ENCODE measurements at regions of chr3 and their contacts with region 1.

Region 1: DNA sequence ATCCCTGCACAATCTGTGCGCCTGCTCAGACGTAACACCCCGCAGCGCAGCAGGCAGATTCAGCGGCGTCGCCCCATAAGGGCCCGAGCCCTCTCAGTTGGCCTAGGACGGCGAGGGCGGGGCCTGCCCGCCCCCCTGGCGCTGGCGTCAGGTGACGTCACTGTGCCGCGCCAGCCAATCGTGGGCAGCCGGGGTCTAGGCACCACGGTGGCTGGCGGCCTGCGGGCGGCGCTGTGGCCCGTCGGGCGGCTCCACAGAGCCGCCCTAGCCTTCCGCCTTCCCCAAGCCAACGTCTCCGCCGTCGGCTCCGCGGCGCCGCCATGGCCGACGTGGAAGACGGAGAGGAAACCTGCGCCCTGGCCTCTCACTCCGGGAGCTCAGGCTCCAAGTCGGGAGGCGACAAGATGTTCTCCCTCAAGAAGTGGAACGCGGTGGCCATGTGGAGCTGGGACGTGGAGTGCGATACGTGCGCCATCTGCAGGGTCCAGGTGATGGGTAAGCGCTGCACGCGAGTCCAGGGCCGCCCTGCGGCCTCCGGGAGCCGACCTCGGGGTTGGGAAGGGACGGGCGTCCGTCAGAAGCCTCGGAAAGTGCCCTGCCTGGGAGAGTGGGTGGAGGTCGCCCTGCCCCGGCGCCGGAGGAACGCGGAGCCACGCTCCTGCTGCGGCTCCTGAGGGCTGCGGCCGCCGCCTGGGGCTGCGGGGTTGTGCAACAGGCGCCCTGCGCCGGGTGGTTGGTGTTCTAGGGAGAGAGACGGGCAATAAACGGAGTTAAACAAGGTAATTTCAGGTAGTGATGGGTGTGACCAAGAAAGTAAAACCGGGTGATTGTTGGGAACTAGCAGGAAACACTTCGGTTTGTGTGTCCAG is at the start of gene RNF7:
- DNase-seq: peak; percentile 98
- ATAC-seq: peak; percentile 93
- H3K4me3 Mint-ChIP-seq: peak within 1 kb of the TSS; percentile 96
- H3K27ac Mint-ChIP-seq: peak within 1 kb of the TSS; percentile 96
- H3K4me1 Mint-ChIP-seq: peaks cover 40% of the 10 kb centered on the region
- H3K27me3 Mint-ChIP-seq: no peaks in the 10 kb centered on the region
- CTCF ChIP-seq: no peak
- total RNA-seq, gene RNF7: 60.7 and 62.1 TPM in 2 replicates

Region 2: DNA sequence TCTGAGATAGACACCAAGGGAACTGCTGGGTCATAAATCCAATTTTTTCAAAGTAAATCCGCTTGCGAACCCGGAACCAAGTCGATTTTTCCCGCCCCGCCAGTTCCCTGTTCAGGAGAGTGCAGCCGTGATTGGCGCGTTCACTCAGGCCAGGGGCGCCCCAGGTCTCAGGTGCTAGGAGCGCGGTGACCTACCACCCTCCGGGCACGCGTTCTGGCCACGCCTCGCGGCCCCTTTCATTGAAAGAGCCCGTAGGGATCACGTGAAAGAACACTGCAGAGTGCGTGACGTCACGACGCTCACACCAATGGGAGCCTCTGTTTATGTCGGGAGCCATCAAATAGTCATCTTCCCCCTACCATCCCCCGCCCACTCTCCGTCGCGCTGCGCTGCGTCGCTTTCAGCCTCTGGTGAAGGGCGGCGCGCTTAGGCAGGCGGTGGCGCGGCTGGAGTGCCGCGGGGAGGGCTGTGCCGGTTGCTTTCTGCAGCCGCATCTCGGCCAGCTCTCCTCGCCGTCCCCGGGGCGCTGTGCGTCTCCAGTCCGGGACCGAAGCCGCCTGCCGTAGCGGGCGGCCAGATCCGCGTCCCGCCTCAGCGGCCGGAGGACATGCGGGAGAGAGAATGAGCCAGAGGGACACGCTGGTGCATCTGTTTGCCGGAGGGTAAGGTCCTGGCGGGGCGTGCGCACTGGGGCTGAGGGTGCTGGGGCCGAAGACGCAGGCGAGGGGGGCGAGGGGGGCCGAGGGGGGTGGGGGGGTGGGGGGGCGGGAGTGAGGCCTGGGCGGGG is 796.6 kb before region 1 on chr3 and contains the start of gene SLC25A36:
- CTCF ChIA-PET with region 1: no interaction called
- POLR2A ChIA-PET with region 1: no interaction called
- intact Hi-C with region 1: loop called (anchors 2 kb)
- DNase-seq: peak; percentile 86
- ATAC-seq: peak; percentile 96
- H3K4me3 Mint-ChIP-seq: peak within 1 kb of the TSS; percentile 96
- H3K27ac Mint-ChIP-seq: peak within 1 kb of the TSS; percentile 96
- H3K4me1 Mint-ChIP-seq: peaks cover 37% of the 10 kb centered on the region
- H3K27me3 Mint-ChIP-seq: no peaks in the 10 kb centered on the region
- CTCF ChIP-seq: no peak
- total RNA-seq, gene SLC25A36: 40.4 and 45.7 TPM in 2 replicates

Region 3: DNA sequence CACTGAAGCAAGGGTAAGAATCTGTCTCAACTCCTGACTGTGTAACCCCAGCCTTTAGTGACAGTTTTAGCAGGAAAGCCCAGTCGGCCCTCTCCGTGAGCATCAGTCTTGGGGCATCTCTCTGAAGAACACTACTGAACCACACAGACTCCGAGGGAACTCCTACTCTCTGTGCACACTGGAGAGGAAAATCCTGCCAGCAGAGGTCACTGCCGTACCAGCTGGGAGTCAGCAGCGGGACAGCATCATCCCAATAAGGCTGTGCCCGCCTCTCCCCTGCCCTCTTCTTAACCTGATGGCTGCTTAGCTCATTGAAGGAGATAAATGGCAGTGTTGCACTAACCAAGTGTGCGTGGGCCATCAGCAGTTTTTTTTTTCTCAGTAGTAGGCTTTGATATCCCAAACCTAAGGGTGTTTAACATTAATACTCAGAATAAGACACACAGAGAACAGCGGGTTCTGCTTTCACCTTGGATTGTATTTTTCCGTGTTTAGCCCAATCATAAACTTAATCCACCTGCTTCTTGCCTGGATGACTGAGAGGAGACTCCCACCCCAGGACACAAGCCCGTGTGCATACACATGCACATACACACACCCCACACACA is 278.1 kb before region 1 on chr3:
- CTCF ChIA-PET with region 1: no interaction called
- POLR2A ChIA-PET with region 1: no interaction called
- intact Hi-C with region 1: loop called (anchors 1 kb)
- DNase-seq: peak; percentile 67
- ATAC-seq: peak; percentile 99
- H3K4me3 Mint-ChIP-seq: no peak overlapping the region
- H3K27ac Mint-ChIP-seq: no peak overlapping the region
- H3K4me1 Mint-ChIP-seq: peaks cover 11% of the 10 kb centered on the region
- H3K27me3 Mint-ChIP-seq: no peaks in the 10 kb centered on the region
- CTCF ChIP-seq: no peak

Region 4: DNA sequence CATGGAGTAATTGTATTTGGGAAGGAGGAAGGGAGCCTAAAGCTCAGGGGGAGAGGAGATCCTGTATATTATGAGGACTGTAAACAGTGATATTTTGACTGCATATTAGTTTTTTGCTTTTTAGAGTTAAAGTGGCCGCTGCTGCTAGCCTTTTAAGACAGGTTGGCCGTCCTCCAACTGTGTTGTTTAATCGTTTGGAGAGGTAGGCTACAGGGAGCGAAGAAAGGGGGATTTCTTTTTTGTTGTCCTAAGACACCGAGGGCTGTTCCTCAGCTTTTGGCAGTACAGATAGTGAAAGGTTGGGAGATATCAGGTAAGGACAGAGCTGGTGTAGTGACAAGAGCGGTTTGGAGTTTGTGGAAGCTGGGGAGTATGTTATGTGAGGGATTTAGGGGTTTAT is 38.4 kb before region 1 on chr3:
- CTCF ChIA-PET with region 1: no interaction called
- POLR2A ChIA-PET with region 1: no interaction called
- intact Hi-C with region 1: no loop called
- DNase-seq: no peak
- ATAC-seq: no peak
- H3K4me3 Mint-ChIP-seq: no peak overlapping the region
- H3K27ac Mint-ChIP-seq: no peak overlapping the region
- H3K4me1 Mint-ChIP-seq: no peaks in the 10 kb centered on the region
- H3K27me3 Mint-ChIP-seq: no peaks in the 10 kb centered on the region
- CTCF ChIP-seq: no peak

Region 5: GRCh38 chr3:141796081-141796888 is 58.0 kb after region 1 on chr3:
- CTCF ChIA-PET with region 1: no interaction called
- POLR2A ChIA-PET with region 1: interaction called, 21 read pairs
- intact Hi-C with region 1: loop called (anchors 1 kb)
- DNase-seq: peak; percentile 39
- ATAC-seq: peak; percentile 86
- H3K4me3 Mint-ChIP-seq: peak overlapping the region; percentile 85
- H3K27ac Mint-ChIP-seq: peak overlapping the region; percentile 85
- H3K4me1 Mint-ChIP-seq: peaks cover 34% of the 10 kb centered on the region
- H3K27me3 Mint-ChIP-seq: peaks cover 2% of the 10 kb centered on the region
- CTCF ChIP-seq: no peak

Region 6: GRCh38 chr3:141998669-141999290 is 260.5 kb after region 1 on chr3:
- CTCF ChIA-PET with region 1: no interaction called
- POLR2A ChIA-PET with region 1: no interaction called
- intact Hi-C with region 1: loop called (anchors 1 kb)
- DNase-seq: no peak
- ATAC-seq: no peak
- H3K4me3 Mint-ChIP-seq: no peak overlapping the region
- H3K27ac Mint-ChIP-seq: no peak overlapping the region
- H3K4me1 Mint-ChIP-seq: peaks cover 3% of the 10 kb centered on the region
- H3K27me3 Mint-ChIP-seq: no peaks in the 10 kb centered on the region
- CTCF ChIP-seq: no peak

Region 7: DNA sequence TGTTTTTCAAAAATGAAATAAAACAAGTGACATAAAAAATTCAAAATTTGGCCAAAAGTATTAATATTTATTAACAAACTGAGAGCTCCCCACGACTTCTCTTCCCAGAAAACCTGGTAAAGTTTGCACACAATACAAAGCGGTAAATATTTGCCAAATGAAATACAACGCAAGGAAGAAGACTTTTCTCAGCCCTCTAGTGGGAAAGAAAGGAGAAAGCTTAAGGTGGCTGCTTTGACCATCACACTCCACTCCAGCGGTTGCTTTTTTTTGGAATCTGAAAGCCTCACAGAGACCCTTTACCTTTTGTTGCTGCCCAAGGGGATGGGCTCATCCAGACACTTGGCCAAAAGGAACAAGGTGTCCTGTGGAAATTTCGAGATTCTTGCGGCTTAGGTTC is 488.2 kb after region 1 on chr3:
- CTCF ChIA-PET with region 1: no interaction called
- POLR2A ChIA-PET with region 1: no interaction called
- intact Hi-C with region 1: loop called (anchors 1 kb)
- DNase-seq: no peak
- ATAC-seq: no peak
- H3K4me3 Mint-ChIP-seq: peak overlapping the region; percentile 38
- H3K27ac Mint-ChIP-seq: no peak overlapping the region
- H3K4me1 Mint-ChIP-seq: peaks cover 6% of the 10 kb centered on the region
- H3K27me3 Mint-ChIP-seq: no peaks in the 10 kb centered on the region
- CTCF ChIP-seq: no peak

Region 8: DNA sequence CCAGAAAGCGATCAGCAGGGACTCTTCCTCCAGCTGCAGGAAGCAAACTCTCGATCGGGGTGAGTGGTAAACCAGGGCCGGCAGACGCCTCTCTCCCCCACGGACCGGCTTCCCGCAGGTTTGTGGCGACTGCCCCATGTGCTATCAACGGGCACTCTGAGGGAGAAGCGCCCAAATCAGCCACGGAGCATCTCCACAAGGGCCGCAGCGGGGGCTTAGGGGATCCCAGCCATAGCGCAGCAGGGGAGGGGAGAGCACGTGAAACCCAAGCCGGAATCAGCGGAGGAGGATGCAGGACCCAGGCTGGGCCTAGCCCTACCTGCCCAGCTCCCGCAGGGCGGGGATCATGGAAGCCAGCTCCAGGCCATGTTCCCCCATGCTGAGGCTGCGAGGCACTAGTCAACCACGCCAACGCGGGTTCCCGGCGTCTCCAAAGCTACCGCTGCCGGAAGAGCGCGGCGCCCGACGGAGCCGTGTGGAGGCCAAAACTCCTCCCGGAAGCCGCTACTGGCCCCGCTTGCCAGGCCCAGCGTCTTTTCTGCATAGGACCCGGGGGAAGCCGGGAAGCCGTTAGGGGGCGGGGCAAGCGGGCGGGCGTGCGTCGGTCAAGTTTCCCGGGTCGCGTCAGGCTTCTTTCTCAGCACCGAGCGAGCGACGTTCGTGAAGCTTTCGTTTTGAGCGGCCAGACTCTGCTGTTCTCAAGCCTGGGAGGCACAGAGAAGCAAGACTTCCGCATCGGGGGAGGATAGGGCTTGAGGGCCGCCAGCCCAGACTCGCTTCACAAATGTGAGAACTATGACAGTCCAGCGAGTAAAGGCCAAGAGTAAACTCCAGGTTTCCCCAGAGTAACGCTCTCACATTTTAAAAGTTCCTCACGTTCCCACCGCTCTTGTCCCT is 840.3 kb after region 1 on chr3 and contains the start of gene ATR:
- CTCF ChIA-PET with region 1: no interaction called
- POLR2A ChIA-PET with region 1: interaction called, 10 read pairs
- intact Hi-C with region 1: loop called (anchors 5 kb)
- DNase-seq: peak; percentile 92
- ATAC-seq: peak; percentile 95
- H3K4me3 Mint-ChIP-seq: peak within 1 kb of the TSS; percentile 96
- H3K27ac Mint-ChIP-seq: peak within 1 kb of the TSS; percentile 97
- H3K4me1 Mint-ChIP-seq: peaks cover 48% of the 10 kb centered on the region
- H3K27me3 Mint-ChIP-seq: peaks cover 5% of the 10 kb centered on the region
- CTCF ChIP-seq: no peak
- total RNA-seq, gene ATR: 47.4 and 47.6 TPM in 2 replicates

Measured in activated B cell treated with CpG ODN at 0.5 μM for 24 hours (primary cell).